CD8-positive, alpha-beta T cell (primary cell): ENCODE measurements at regions of chr13 and their contacts with region 1.

Region 1: DNA sequence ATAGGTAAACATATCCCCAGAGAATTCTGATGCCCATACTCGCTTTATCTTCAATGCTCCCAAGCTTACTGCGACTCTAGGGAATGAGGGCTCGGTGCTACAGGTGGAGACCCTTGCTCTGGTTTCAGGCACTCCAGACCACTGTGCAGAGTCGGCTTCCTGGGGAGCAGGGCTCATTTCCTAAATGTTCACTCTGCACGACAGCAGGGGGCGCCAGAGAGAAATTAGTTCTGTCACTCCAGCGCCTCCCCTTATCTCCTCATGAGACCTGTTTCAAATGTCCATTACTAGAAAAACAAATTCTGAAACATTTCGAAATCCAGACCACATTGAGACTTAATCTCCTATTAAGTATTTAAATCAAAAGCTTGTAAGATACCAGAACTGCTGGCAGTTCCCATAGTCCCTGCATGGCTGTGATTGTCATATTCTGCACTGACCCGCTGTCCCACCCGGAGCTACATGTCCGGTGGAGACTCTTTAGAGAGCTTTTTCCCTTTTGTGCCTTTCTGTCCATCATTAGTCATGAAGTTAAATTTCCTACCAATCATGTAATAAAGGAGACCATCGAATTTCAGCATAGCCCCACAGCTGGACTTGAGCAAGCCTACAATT is 22.4 kb downstream of the EPSTI1 start:
- DNase-seq: peak; percentile 65 to 90 (median 82)
- ATAC-seq: peak; percentile 92
- H3K4me3 ChIP-seq: no peak overlapping the region
- H3K4me3 Mint-ChIP-seq: no peak overlapping the region
- H3K27ac ChIP-seq: no peak overlapping the region
- H3K27ac Mint-ChIP-seq: peak overlapping the region; percentile 28
- H3K4me1 ChIP-seq: peaks cover 5% of the 10 kb centered on the region
- H3K4me1 Mint-ChIP-seq: peaks cover 17% of the 10 kb centered on the region
- H3K27me3 ChIP-seq: no peaks in the 10 kb centered on the region
- H3K27me3 Mint-ChIP-seq: no peaks in the 10 kb centered on the region
- CTCF ChIP-seq: peak; percentile 90

Region 2: GRCh38 chr13:42405665-42406390 is 563.8 kb before region 1 on chr13:
- CTCF ChIA-PET with region 1: no interaction called
- POLR2A ChIA-PET with region 1: no interaction called
- intact Hi-C with region 1: no loop called
- DNase-seq: peak in 4 of 9 experiments; percentile 25 to 78 (median 50)
- ATAC-seq: peak; percentile 57
- H3K4me3 ChIP-seq: no peak overlapping the region
- H3K4me3 Mint-ChIP-seq: peak overlapping the region; percentile 4
- H3K27ac ChIP-seq: peak overlapping the region in 1 of 2 experiments; percentile 47
- H3K27ac Mint-ChIP-seq: peak overlapping the region; percentile 20
- H3K4me1 ChIP-seq: no peaks in the 10 kb centered on the region
- H3K4me1 Mint-ChIP-seq: peaks cover 11% of the 10 kb centered on the region
- H3K27me3 ChIP-seq: no peaks in the 10 kb centered on the region
- H3K27me3 Mint-ChIP-seq: no peaks in the 10 kb centered on the region
- CTCF ChIP-seq: no peak

Region 3: DNA sequence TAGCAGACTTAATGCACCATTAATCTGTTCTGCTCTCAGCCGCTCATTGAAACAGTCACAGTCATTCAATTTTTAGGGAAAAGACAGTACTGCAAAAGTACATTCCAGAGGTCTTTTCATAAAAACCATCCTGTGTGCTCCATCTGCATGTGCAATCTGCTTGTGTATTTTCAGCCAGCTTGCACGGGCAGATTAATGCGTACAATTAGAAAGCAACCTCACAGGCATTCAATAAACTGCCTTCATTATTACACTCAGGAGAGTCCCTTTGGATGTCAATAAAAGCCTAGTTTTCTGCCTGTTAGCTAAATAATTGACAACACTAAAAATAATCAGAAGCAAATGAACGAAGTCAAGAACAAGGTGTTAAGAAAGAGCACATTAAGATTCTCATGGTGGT is 19.5 kb before region 1 on chr13:
- CTCF ChIA-PET with region 1: interaction called, 14 read pairs
- POLR2A ChIA-PET with region 1: no interaction called
- intact Hi-C with region 1: no loop called
- DNase-seq: no peak
- ATAC-seq: no peak
- H3K4me3 ChIP-seq: no peak overlapping the region
- H3K4me3 Mint-ChIP-seq: no peak overlapping the region
- H3K27ac ChIP-seq: no peak overlapping the region
- H3K27ac Mint-ChIP-seq: no peak overlapping the region
- H3K4me1 ChIP-seq: no peaks in the 10 kb centered on the region
- H3K4me1 Mint-ChIP-seq: no peaks in the 10 kb centered on the region
- H3K27me3 ChIP-seq: no peaks in the 10 kb centered on the region
- H3K27me3 Mint-ChIP-seq: no peaks in the 10 kb centered on the region
- CTCF ChIP-seq: no peak

Region 4: GRCh38 chr13:42991892-42992763 is 22.5 kb after region 1 on chr13 and contains the start of gene EPSTI1:
- CTCF ChIA-PET with region 1: interaction called, 14 read pairs
- POLR2A ChIA-PET with region 1: interaction called, 5 read pairs
- intact Hi-C with region 1: loop called (anchors 1 to 2 kb)
- DNase-seq: peak; percentile 41 to 89 (median 74)
- ATAC-seq: peak; percentile 83
- H3K4me3 ChIP-seq: peak within 1 kb of the TSS; percentile 74 to 78
- H3K4me3 Mint-ChIP-seq: peak within 1 kb of the TSS; percentile 93
- H3K27ac ChIP-seq: peak within 1 kb of the TSS; percentile 96 to 97
- H3K27ac Mint-ChIP-seq: peak within 1 kb of the TSS; percentile 99
- H3K4me1 ChIP-seq: peaks cover 27% of the 10 kb centered on the region
- H3K4me1 Mint-ChIP-seq: peaks cover 34% of the 10 kb centered on the region
- H3K27me3 ChIP-seq: no peaks in the 10 kb centered on the region
- H3K27me3 Mint-ChIP-seq: no peaks in the 10 kb centered on the region
- CTCF ChIP-seq: no peak
- total RNA-seq, gene EPSTI1: 8.8 to 9.7 TPM

Region 5: GRCh38 chr13:43074824-43075510 is 105.3 kb after region 1 on chr13:
- CTCF ChIA-PET with region 1: interaction called, 4 read pairs
- POLR2A ChIA-PET with region 1: no interaction called
- intact Hi-C with region 1: loop called in 1 of 2 experiments (anchors 5 kb)
- DNase-seq: peak in 1 of 9 experiments; percentile 20
- ATAC-seq: no peak
- H3K4me3 ChIP-seq: no peak overlapping the region
- H3K4me3 Mint-ChIP-seq: peak overlapping the region; percentile 55
- H3K27ac ChIP-seq: no peak overlapping the region
- H3K27ac Mint-ChIP-seq: peak overlapping the region; percentile 1
- H3K4me1 ChIP-seq: no peaks in the 10 kb centered on the region
- H3K4me1 Mint-ChIP-seq: peaks cover 42% of the 10 kb centered on the region
- H3K27me3 ChIP-seq: no peaks in the 10 kb centered on the region
- H3K27me3 Mint-ChIP-seq: no peaks in the 10 kb centered on the region
- CTCF ChIP-seq: no peak

Region 6: DNA sequence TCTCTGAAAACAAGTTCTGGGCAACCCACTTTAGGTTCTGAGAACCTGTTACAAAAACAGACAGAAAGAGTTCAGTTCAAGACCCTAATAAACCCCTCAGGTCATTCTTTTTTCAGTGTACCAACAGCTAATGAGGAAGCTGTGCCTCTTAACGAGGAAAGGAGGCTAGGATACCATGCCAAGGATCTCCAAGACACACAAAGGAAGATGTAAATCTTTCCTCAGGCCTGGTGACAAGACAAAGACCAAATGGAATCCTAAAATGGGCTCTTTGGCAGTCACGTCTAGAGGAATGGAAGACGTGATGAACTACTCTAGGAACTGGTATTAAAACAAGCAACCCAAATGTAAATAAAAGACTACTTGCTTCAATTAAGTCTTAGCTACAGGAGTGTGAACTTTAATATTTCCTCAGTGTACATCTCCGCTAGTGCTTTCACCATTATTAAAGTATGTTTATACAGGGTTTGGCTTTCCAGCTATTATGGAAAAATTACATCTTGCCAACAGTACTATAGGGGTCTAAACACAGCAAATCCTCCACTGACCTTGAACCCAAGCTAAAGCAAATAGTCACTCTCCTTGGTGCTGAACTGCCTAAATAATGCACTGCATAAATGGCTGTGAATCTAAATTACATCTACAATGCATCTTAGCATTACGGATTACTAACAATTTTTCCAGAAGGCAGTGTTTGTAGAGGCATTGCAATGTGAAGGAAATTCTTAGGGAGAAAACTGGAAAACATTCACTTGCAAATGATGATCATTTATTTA is 774.8 kb after region 1 on chr13:
- CTCF ChIA-PET with region 1: no interaction called
- POLR2A ChIA-PET with region 1: no interaction called
- intact Hi-C with region 1: no loop called
- DNase-seq: no peak
- ATAC-seq: no peak
- H3K4me3 ChIP-seq: no peak overlapping the region
- H3K4me3 Mint-ChIP-seq: no peak overlapping the region
- H3K27ac ChIP-seq: no peak overlapping the region
- H3K27ac Mint-ChIP-seq: no peak overlapping the region
- H3K4me1 ChIP-seq: no peaks in the 10 kb centered on the region
- H3K4me1 Mint-ChIP-seq: no peaks in the 10 kb centered on the region
- H3K27me3 ChIP-seq: no peaks in the 10 kb centered on the region
- H3K27me3 Mint-ChIP-seq: peaks cover 2% of the 10 kb centered on the region
- CTCF ChIP-seq: no peak

Region 7: GRCh38 chr13:43804461-43805070 is 834.9 kb after region 1 on chr13:
- CTCF ChIA-PET with region 1: interaction called, 11 read pairs
- POLR2A ChIA-PET with region 1: no interaction called
- intact Hi-C with region 1: loop called in 1 of 2 experiments (anchors 1 kb)
- DNase-seq: peak in 3 of 9 experiments; percentile 22 to 60 (median 55)
- ATAC-seq: no peak
- H3K4me3 ChIP-seq: no peak overlapping the region
- H3K4me3 Mint-ChIP-seq: no peak overlapping the region
- H3K27ac ChIP-seq: no peak overlapping the region
- H3K27ac Mint-ChIP-seq: no peak overlapping the region
- H3K4me1 ChIP-seq: no peaks in the 10 kb centered on the region
- H3K4me1 Mint-ChIP-seq: peaks cover 2% of the 10 kb centered on the region
- H3K27me3 ChIP-seq: no peaks in the 10 kb centered on the region
- H3K27me3 Mint-ChIP-seq: peaks cover 5% of the 10 kb centered on the region
- CTCF ChIP-seq: peak; percentile 69

Region 8: GRCh38 chr13:44169018-44169911 is 1199.6 kb after region 1 on chr13:
- CTCF ChIA-PET with region 1: no interaction called
- POLR2A ChIA-PET with region 1: no interaction called
- intact Hi-C with region 1: no loop called
- DNase-seq: no peak
- ATAC-seq: no peak
- H3K4me3 ChIP-seq: no peak overlapping the region
- H3K4me3 Mint-ChIP-seq: no peak overlapping the region
- H3K27ac ChIP-seq: no peak overlapping the region
- H3K27ac Mint-ChIP-seq: no peak overlapping the region
- H3K4me1 ChIP-seq: no peaks in the 10 kb centered on the region
- H3K4me1 Mint-ChIP-seq: no peaks in the 10 kb centered on the region
- H3K27me3 ChIP-seq: no peaks in the 10 kb centered on the region
- H3K27me3 Mint-ChIP-seq: no peaks in the 10 kb centered on the region
- CTCF ChIP-seq: no peak